Left cardiac atrium (tissue), 4 donors: ENCODE measurements at regions of chrX and their contacts with region 1.

Region 1: DNA sequence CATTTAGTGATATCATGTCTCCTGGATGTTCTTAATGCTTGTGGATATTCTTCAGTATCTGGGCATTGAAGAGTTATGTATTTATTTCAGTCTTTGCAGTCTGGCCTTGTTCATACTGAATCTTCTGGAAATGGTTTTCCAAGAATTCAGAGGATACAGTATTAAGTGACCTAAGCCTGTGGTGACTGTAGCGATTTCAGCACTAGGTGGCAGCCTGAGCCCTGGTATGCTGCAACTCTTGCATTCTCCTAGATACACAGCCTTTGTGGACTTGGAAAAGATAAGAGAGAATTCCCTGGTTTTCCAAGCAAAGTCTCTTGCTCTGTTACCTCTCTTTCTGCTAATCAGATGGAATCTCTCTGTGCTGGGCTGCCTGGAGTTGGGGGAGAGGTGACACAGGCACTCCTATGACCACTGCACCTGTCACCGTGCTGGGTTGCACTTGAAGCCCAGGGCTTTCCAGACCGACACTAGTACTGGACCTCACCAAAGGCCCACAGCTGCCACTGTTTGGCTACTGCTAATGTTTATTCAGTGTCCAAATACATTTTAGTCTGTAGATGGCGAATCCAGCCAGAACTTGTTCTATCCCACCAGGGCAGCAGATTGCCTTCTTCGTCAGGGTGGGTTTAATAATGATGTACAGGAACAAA is 19.3 kb upstream of the SPIN2A start:
- DNase-seq: no peak
- ATAC-seq: peak; percentile 62 to 89

Region 2: DNA sequence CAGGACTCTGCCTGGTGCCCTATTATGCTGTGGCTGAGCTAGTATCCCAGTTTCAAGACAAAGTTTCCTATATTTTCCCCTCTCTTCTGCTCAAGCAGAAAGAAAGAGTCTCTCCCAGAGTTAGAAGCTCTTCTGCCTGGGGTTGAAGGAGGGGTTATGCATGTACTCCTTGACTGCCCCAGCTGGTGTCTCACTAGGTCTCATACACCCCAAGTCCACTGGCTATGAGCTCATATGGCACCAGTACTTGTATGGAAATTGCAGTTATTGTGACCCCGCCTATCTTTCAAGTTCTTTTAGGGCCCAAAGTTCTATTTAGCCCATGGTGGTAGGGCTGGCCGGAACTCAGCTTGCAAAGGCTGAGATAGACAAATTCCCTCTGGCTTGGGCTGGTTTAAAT is 295.6 kb before region 1 on chrX:
- intact Hi-C with region 1: no loop called
- DNase-seq: no peak
- ATAC-seq: no peak

Region 3: DNA sequence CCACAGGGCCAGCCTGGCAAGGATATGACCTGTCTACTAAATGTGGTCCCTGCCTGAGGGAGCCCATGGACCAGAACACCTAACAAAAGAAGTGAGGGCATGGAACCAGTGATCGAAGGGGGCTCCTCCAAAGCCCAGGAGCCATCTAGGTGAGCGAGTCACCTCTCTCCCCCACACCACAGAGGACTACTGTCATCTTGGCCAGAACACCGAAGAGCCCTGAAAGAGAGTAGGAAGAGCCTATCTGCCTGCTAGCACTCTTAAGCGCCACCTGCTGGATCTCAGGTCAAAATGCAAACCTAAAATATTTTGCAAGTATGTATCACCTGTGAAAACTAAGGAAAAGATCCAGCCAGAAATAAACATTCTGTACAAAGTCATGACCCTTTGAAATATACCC is 297.4 kb after region 1 on chrX:
- intact Hi-C with region 1: loop called in 1 of 2 experiments (anchors 10 kb)
- DNase-seq: no peak
- ATAC-seq: no peak